ENCODE measurements at regions of chr12 and their contacts with region 1.

Region 1: DNA sequence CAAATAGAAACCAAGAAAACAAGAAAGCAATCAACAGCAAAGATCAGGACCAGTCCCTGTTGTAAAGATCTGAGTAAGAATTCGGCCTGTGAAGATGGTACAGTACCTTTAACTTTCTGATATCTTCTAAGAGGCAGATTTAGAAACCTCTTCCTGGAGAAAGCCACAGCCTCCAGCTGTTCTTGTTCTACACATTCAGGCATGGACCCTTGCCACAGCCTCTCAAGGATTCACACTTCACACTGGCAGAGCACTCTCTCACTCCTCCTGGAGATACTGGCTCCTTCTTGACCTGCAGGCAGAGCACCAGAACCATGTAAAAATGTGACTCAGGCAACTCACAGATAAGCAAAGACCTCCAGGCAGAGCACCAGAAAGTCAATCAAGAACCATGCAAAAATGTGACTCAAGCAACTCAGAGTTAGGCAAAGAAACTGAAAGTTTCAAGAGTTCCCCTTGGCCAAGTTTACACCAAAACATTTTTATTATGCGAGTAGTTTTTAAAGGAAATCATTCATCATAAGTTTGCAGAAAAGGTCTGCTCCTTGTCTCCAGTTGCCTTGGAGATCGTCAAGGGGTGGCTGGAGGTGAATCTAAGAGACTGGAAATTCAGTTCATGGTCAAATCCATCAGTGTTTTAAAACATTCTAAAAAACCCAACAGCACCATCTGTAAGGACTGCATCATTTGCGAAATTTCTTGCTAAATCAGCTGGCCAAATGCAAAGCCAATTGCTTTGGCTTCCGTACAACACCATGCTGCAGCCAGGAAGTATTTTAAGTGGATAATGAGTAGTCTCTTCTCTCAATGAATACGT is 119.3 kb upstream of the MDM1 start:
- DNase-seq: no peak

Region 2: GRCh38 chr12:67648521-67649260 is 802.8 kb before region 1 on chr12 and contains the start of gene DYRK2:
- intact Hi-C with region 1: no loop called
- DNase-seq: peak; percentile 87
- total RNA-seq, gene DYRK2: 56.0 TPM

Region 3: GRCh38 chr12:68406134-68406594 is 45.3 kb before region 1 on chr12:
- intact Hi-C with region 1: loop called (anchors 5 kb)
- DNase-seq: peak; percentile 95

Region 4: DNA sequence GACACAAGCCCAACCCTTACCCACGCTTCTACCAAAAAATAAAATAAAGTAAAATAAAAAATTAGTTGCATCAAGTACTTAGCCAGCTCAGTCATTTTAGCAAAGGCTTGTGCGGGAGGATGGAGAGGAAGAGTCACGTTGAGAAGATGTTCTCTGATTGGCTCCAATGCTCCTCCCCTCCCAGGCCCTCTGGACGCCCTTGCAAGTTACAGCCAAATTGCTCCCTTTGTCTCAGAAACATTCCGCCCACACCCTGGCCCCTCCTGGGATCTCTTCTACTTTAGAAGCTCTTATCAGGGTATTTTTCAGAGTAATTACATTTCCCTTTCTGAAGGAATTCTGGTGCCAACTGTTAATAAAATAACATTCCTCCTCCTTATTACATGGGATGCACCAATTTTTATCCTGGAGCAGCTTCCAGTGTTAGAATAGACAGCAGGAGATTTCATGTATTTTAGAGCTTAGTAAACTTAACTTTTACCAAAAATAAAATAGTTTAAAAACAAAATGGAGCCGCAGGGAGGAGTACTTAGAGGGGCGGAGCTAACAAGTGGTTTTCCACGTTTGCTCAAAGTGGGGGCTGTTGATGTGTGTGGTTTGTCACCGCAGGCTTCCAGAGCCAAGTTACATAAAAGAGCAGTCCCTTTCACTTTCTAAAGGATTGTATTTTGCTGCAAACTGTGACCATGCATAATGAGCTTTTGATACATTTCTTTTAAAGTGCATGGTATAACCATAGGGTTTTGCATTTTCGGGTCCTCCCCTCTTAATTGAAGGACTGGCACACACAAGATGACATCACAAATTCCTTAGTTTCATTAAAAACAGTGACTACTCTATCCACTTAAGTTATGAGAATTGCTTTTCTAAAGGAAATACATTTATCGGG is 87.5 kb after region 1 on chr12:
- intact Hi-C with region 1: loop called (anchors 5 kb)
- DNase-seq: peak; percentile 83

Measured in cardiac septum (tissue), 1 donor.